H1 (cell line): ENCODE measurements at regions of chr2 and their contacts with region 1.

Region 1: GRCh38 chr2:27356382-27357181 is at the start of gene GTF3C2:
- DNase-seq: peak; percentile 92 to 93
- H3K4me3 ChIP-seq: peak within 1 kb of the TSS; percentile 68 to 97 (median 90)
- H3K27ac ChIP-seq: peak within 1 kb of the TSS; percentile 95
- H3K4me1 ChIP-seq: peaks cover 0 to 12% (median 4%) of the 10 kb centered on the region in 4 experiments; a peak in 4 of 7 replicates
- H3K27me3 ChIP-seq: no peaks in the 10 kb centered on the region
- CTCF ChIP-seq: no peak
- EP300 ChIP-seq: no peak
- POLR2A ChIP-seq: peak; percentile 59 to 91
- RAD21 ChIP-seq: no peak
- total RNA-seq, gene GTF3C2: 118 and 129 TPM in 2 replicates

Region 2: DNA sequence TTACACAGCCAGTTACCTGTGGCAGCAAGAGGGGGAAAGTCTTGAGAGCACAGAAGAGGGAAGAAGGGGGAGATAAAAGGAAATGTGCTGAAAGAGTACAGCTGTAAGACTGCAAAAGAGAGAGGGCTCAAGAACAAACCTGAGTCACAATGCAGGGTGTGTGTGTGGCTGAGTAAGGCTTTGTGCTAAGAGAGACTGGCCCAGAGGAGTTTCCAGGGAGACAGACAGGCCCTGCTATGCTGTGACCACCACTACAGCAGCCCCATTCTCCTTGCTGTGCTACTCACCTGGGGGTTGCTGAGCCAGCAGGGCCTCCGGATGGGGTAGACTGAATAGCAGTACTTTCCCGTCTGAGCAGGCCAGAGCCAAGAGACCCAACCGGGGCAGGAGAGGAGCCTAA is 21.3 kb before region 1 on chr2:
- CTCF ChIA-PET with region 1: interaction called, 8 read pairs
- POLR2A ChIA-PET with region 1: interaction called, 16 read pairs
- DNase-seq: no peak
- H3K4me3 ChIP-seq: no peak overlapping the region
- H3K27ac ChIP-seq: no peak overlapping the region
- H3K4me1 ChIP-seq: no peaks in the 10 kb centered on the region
- H3K27me3 ChIP-seq: no peaks in the 10 kb centered on the region
- CTCF ChIP-seq: no peak
- EP300 ChIP-seq: no peak
- POLR2A ChIP-seq: no peak
- RAD21 ChIP-seq: no peak

Region 3: DNA sequence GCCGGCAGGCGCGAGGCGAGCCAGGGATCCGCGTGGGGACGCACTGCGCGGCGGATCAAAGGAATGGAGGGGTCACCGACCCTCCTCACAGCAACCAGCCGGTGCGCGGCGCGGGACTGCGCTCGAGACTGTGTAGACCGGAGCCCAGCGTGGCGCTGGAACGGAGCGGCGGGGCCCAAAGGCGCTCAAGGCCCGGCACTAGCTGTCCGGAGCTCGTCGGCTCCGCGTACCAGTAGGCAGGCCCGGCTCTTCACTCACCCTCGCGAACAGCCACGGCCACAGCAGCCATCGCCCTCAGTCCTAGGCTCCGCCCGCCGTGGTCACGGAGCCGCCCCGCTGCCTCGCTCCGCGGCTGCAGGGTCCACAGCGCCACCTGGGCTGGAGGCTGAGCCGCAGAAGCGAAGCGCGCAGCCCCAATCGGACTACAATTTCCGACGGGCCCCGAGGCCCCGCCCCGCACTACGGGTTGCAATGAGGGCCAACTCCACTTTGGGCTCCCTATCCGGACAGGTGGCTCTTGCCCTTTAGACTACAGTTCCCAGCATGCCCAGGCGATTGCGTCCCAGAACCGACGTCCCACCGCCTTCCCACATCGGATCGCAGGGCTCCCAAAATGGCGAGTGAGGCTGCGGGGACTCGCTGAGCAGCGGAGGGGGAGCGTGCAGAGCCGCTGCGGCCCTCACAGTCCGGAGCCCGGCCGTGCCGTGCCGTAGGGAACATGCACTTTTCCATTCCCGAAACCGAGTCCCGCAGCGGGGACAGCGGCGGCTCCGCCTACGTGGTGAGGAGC is 13.6 kb after region 1 on chr2 and contains the starts of genes EIF2B4 and SNX17:
- CTCF ChIA-PET with region 1: interaction called, 6 read pairs
- POLR2A ChIA-PET with region 1: interaction called, 135 read pairs
- DNase-seq: peak; percentile 98 to 99
- H3K4me3 ChIP-seq: peak within 1 kb of the TSS; percentile 72 to 99 (median 88)
- H3K27ac ChIP-seq: peak within 1 kb of the TSS; percentile 62
- H3K4me1 ChIP-seq: peaks cover 0 to 4% (median 2%) of the 10 kb centered on the region in 4 experiments; a peak in 4 of 7 replicates
- H3K27me3 ChIP-seq: no peaks in the 10 kb centered on the region
- CTCF ChIP-seq: peak in 2 of 3 experiments; percentile 71 to 87; a peak in 3 of 4 replicates
- EP300 ChIP-seq: peak in 1 of 2 experiments; percentile 42; a peak in 1 of 3 replicates
- POLR2A ChIP-seq: peak in 1 of 2 experiments; percentile 84; a peak in 2 of 3 replicates
- RAD21 ChIP-seq: peak; percentile 50 to 58; a peak in 3 of 4 replicates
- total RNA-seq, gene EIF2B4: 63.2 and 66.0 TPM in 2 replicates
- total RNA-seq, gene SNX17: 54.9 and 59.1 TPM in 2 replicates

Region 4: DNA sequence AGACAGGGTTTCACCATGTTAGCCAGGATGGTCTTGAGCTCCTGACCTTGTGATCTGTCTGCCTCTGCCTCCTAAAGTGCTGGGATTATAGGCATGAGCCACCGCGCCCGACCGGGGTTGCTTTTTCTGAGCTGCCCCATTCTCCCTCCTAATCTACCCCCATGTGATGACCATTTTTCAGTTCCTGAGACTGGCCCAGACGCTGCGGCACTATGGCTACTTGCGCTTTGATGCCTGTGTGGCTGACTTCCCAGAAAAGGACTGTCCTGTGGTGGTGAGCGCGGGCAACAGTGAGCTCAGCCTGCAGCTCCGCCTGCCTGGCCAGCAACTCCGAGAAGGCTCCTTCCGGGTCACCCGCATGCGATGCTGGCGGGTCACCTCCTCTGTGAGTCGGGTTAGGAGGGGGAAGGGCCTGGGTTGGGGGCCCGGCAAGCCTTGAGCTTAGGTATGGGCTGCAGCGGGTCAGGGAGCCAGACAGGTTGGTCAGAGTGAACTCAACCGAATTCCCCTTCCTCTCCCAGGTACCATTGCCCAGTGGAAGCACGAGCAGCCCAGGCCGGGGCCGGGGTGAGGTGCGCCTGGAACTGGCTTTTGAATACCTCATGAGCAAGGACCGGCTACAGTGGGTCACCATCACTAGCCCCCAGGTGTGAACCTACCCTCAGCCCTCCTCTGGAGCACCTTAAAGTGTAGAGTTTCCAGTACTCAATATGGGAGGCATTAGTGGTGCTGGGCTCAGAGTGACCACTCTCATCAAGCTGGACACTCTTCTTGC is 18.9 kb after region 1 on chr2:
- CTCF ChIA-PET with region 1: interaction called, 6 read pairs
- POLR2A ChIA-PET with region 1: interaction called, 135 read pairs
- DNase-seq: no peak
- H3K4me3 ChIP-seq: no peak overlapping the region
- H3K27ac ChIP-seq: no peak overlapping the region
- H3K4me1 ChIP-seq: peaks cover 0 to 10% (median 3%) of the 10 kb centered on the region in 4 experiments; a peak in 5 of 7 replicates
- H3K27me3 ChIP-seq: no peaks in the 10 kb centered on the region
- CTCF ChIP-seq: no peak
- EP300 ChIP-seq: no peak
- POLR2A ChIP-seq: 0 out of 3 replicates have a peak, but pooled peaks of 1 of the 2 experiments have one; percentile 10
- RAD21 ChIP-seq: no peak

Region 5: GRCh38 chr2:27380626-27381545 is 24.3 kb after region 1 on chr2 and contains the start of gene ZNF513:
- CTCF ChIA-PET with region 1: interaction called, 3 read pairs
- POLR2A ChIA-PET with region 1: interaction called, 34 read pairs
- DNase-seq: peak; percentile 91 to 94
- H3K4me3 ChIP-seq: peak within 1 kb of the TSS; percentile 65 to 96 (median 82)
- H3K27ac ChIP-seq: peak within 1 kb of the TSS; percentile 93
- H3K4me1 ChIP-seq: peaks cover 0 to 8% (median 2%) of the 10 kb centered on the region in 4 experiments; a peak in 5 of 7 replicates
- H3K27me3 ChIP-seq: no peaks in the 10 kb centered on the region
- CTCF ChIP-seq: no peak
- EP300 ChIP-seq: peak; percentile 15 to 94
- POLR2A ChIP-seq: peak in 1 of 2 experiments; percentile 84; a peak in 2 of 3 replicates
- RAD21 ChIP-seq: peak in 1 of 2 experiments; percentile 5; a peak in 1 of 4 replicates
- total RNA-seq, gene ZNF513: 17.3 and 18.8 TPM in 2 replicates

Region 6: DNA sequence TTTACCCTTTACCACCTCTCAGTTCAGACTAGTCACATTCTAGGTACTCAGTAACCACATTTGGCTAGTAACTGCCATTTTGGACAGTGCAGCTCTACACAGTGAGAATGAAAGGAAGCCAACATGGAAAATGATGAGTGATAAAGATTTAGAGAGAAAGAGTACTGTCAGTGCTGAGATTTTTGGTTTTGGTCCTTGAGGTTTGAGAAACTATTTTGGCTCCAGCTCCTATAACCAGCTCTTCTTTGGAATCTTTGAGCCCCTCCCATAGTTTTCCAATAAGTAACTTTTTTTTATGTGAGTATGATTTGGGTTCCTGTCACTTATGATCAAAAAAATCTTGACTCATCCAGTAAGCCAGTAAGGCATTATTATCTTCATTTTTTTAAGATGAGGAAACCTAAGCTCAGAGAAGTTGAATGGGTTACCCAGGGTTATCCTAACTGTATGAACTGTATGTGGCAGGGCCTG is 706.9 kb after region 1 on chr2:
- CTCF ChIA-PET with region 1: no interaction called
- POLR2A ChIA-PET with region 1: no interaction called
- DNase-seq: no peak
- H3K4me3 ChIP-seq: no peak overlapping the region
- H3K27ac ChIP-seq: no peak overlapping the region
- H3K4me1 ChIP-seq: no peaks in the 10 kb centered on the region
- H3K27me3 ChIP-seq: no peaks in the 10 kb centered on the region
- CTCF ChIP-seq: no peak
- EP300 ChIP-seq: no peak
- POLR2A ChIP-seq: no peak
- RAD21 ChIP-seq: no peak